ENCODE measurements at regions of chr14 and their contacts with region 1.

Region 1: GRCh38 chr14:22766456-22767322 is at the start of gene OXA1L:
- DNase-seq: peak; percentile 98
- total RNA-seq, gene OXA1L: 111 TPM

Region 2: DNA sequence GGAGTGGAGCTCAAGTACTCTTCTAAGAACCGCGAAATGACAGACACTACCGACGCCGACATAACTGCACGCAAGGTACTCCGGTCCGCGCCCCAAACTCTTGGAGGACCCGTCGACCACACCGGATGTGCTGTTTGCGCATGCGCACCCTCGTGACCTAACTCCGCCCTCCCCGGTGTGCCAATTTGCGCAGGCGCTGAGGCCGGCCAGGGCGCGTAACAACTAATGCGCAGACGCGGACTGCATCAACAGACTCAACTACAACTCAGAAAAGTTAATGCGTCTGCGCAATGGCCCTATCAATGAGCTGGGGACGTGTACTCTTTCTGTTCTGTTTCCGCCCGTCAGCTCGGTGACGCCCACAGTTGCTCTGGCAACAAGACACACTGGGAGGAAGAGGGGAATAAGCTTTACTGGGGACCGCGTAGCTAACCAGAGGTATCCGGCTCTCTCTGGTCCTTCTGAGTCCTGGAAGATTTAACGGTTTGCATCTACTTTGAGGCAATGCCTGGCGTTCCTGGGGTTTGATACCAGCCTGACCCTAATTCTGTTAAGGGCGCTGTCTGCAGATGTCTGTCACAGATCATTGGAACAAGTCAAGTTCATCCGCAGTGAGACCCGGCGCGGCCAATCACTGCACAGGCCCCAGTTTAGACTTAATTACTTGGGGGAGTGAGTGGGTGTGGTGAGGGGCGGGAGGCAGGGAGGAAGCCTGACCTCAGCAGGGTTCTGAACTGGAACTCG is 177.4 kb before region 1 on chr14 and contains the start of gene DAD1:
- intact Hi-C with region 1: loop called (anchors 5 kb)
- DNase-seq: peak; percentile 99
- total RNA-seq, gene DAD1: 134 TPM

Region 3: GRCh38 chr14:22802860-22803686 is 36.4 kb after region 1 on chr14:
- intact Hi-C with region 1: no loop called
- DNase-seq: no peak

Region 4: GRCh38 chr14:22822571-22823098 is 55.9 kb after region 1 on chr14:
- intact Hi-C with region 1: loop called (anchors 5 kb)
- DNase-seq: no peak

Measured in cardiac septum (tissue), 1 donor.